AG04449 (cell line): ENCODE measurements at regions of chr1 and their contacts with region 1.

Region 1: GRCh38 chr1:116498789-116499628 is 71.8 kb downstream of the CD58 start:
- DNase-seq: no peak
- H3K4me3 ChIP-seq: no peak overlapping the region
- CTCF ChIP-seq: peak; percentile 71

Region 2: GRCh38 chr1:115807723-115808122 is 691.3 kb before region 1 on chr1:
- CTCF ChIA-PET with region 1: interaction called, 15 read pairs
- POLR2A ChIA-PET with region 1: no interaction called
- DNase-seq: peak; percentile 9
- H3K4me3 ChIP-seq: no peak overlapping the region
- CTCF ChIP-seq: peak; percentile 75

Region 3: GRCh38 chr1:116087628-116088027 is 411.4 kb before region 1 on chr1:
- CTCF ChIA-PET with region 1: no interaction called
- POLR2A ChIA-PET with region 1: no interaction called
- DNase-seq: no peak
- H3K4me3 ChIP-seq: no peak overlapping the region
- CTCF ChIP-seq: no peak

Region 4: DNA sequence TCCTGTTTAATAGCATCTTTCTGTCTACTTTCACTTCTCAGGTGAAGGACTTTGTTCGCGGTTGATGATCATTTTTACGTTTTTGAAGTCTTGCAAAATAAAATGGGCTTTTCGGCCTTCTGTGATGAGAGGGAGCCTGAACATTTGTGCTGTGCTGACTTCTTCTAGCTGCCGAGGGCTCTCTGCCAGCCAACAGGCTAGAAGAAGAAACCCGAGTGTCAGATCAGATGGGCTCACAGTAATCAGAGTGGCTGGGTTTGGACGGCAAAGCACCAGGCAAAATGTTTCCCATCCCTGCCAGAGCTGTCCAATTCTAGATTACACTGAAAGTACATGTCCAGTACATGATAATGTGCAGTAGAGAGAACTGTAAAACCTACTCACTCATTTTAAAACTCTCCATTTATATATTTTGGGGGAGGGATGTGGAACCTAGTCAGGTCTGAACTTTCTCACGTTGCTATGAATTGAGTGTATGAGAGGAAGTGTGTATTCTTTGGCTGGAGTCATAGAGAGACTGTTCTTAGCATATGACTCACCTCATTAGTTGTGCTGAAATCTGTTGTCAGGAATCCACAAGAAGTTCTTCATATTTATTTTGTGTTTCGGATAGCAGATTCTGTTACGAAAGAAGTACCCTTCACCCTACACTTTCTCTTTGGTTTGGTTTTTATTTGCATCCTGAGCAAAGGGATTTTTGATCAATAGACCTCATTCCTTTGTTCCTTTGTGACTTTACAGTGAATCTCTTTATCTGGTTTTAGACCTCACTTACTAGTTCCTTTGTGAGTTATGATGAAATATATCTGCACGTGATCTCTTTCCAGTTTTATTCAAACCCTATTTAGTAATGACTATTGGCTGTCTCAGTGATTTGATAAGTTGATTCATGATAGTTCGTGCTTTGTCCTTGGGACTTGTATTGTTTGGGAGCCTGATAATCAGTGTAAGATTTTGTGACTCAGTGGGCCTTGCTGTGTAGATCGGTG is 121.2 kb before region 1 on chr1:
- CTCF ChIA-PET with region 1: interaction called, 17 read pairs
- POLR2A ChIA-PET with region 1: no interaction called
- DNase-seq: peak; percentile 93
- H3K4me3 ChIP-seq: peak overlapping the region; percentile 31
- CTCF ChIP-seq: no peak

Region 5: GRCh38 chr1:116508978-116509595 is 10.1 kb after region 1 on chr1:
- CTCF ChIA-PET with region 1: interaction called, 22 read pairs
- POLR2A ChIA-PET with region 1: no interaction called
- DNase-seq: peak; percentile 62
- H3K4me3 ChIP-seq: no peak overlapping the region
- CTCF ChIP-seq: no peak

Region 6: DNA sequence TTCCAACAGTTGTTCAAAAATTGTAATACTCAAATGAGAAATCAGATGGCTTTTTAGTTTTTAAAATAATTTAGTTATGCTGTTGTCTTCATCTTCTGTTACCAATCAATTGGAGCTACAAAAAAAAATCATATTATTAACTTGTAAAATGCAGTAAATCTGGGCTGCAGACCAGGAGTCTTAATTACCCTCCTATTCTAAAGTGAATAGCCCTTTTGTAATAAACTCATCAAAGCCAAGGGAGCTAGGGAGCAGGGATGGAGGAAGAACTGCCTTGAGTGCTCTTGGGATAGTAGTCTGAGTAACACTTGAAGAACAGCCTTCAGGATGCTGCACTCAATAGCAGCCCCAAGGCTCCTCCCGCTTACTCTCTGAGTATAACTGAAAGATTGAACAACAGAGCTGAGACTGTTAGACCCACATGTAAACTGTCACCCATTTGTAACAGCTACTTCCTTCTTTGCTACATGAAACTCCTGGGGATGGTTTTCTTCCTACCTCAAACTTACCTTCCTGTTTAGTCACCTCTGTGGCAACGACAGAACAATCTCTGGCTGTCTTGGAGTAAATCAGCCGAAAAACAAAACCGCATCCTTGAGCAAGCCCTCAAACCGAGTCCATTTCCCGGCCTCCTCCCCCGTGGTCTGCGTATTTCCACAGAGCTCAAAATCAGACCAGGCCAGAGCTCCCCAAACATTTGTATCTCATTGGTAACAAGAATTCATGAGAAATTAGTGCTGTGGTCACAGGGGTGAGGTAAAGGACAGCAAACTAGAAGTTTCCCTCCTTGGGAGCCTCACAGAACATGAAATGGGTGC is 15.9 kb after region 1 on chr1:
- CTCF ChIA-PET with region 1: interaction called, 22 read pairs
- POLR2A ChIA-PET with region 1: no interaction called
- DNase-seq: no peak
- H3K4me3 ChIP-seq: no peak overlapping the region
- CTCF ChIP-seq: no peak